GM12878 (cell line): ENCODE measurements at regions of chr1 and their contacts with region 1.

Region 1: DNA sequence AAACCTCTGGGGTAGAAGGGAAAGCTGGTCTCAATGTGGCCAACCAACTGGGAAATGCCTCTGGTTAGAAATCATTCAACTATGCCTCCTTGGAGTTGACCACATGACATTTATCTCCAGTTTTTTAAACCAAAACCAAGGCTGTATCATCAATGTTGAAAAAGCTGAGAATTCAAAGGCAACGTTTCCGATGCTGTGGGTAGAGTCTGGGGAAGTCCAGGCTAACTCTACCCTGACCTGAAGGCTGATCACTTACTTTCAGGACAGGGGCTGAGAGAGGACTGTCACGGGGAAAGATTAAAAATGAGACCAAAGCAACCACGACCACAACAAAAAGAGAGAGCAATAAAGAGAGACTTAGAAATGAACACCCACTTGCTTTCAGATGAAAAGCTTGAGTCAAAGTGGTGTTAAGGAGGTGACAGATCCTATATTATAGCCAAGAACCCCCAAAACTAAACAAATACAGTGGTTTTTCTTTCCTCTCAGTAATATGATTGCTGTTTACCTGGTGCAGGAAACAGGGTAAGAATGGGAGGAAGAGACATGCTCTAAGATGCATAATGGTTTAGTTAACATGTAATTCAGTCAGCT is 90.8 kb upstream of the TNFSF4 start:
- DNase-seq: peak; percentile 92
- ATAC-seq: peak; percentile 95
- H3K4me3 ChIP-seq: peak overlapping the region; percentile 1; the same call in 1 of the 2 replicates
- H3K27ac ChIP-seq: peak overlapping the region; percentile 46; the same call in 1 of the 2 replicates
- H3K4me1 ChIP-seq: peaks cover 29% of the 10 kb centered on the region
- H3K27me3 ChIP-seq: no peaks in the 10 kb centered on the region
- CTCF ChIP-seq: no peak
- EP300 ChIP-seq: peak; percentile 85 to 91
- POLR2A ChIP-seq: no peak
- RAD21 ChIP-seq: peak; percentile 25; the same call in 1 of the 2 replicates

Region 2: GRCh38 chr1:173212952-173213491 is 84.9 kb before region 1 on chr1:
- CTCF ChIA-PET with region 1: interaction called, 3 read pairs
- POLR2A ChIA-PET with region 1: no interaction called
- RAD21 ChIA-PET with region 1: interaction called, 15 read pairs
- SMC1A ChIA-PET with region 1: interaction called, 10 read pairs
- in situ Hi-C with region 1: no loop called
- intact Hi-C with region 1: no loop called
- DNase-seq: peak; percentile 90
- ATAC-seq: peak; percentile 91
- H3K4me3 ChIP-seq: no peak overlapping the region
- H3K27ac ChIP-seq: no peak overlapping the region
- H3K4me1 ChIP-seq: peaks cover 5% of the 10 kb centered on the region
- H3K27me3 ChIP-seq: no peaks in the 10 kb centered on the region
- CTCF ChIP-seq: no peak
- EP300 ChIP-seq: peak; percentile 58 to 92; a peak in 3 of 4 replicates
- POLR2A ChIP-seq: no peak
- RAD21 ChIP-seq: 0 out of 2 replicates have a peak, but pooled peaks have one; percentile 13

Region 3: DNA sequence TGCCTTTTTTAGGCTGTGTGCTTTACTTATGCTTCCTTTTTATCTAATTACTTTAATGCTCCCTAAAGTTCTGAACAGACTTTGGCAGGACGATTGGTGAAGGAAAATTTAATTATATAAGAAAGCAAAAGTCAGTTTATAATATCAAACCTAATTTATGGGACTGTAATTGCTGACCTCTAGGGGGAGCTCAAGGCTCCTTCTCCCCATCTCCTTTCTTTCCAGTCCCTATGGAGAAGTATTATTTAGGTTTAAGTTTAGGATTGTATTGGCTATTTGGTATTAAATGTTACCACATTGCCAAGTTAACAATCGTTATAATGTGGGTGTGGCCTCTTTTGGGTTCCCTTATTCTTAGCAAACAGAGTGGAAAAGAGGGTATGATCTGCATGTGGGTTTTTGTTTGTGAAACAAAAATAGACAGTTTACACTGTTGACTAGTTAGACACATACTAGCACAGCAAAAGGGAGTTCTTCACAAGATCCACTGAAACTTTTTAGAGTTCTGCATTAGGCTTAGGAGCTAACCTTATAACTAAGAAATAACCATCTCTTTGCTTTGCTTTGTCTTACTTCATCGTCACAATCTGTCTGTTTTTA is 42.6 kb before region 1 on chr1:
- CTCF ChIA-PET with region 1: interaction called, 15 read pairs
- POLR2A ChIA-PET with region 1: no interaction called
- RAD21 ChIA-PET with region 1: interaction called, 5 read pairs
- SMC1A ChIA-PET with region 1: interaction called, 8 read pairs
- in situ Hi-C with region 1: no loop called
- intact Hi-C with region 1: loop called (anchors 5 kb)
- DNase-seq: peak; percentile 16
- ATAC-seq: peak; percentile 67
- H3K4me3 ChIP-seq: no peak overlapping the region
- H3K27ac ChIP-seq: no peak overlapping the region
- H3K4me1 ChIP-seq: peaks cover 4% of the 10 kb centered on the region; the same call in 1 of the 2 replicates
- H3K27me3 ChIP-seq: no peaks in the 10 kb centered on the region
- CTCF ChIP-seq: peak; percentile 67 to 80 (median 70)
- EP300 ChIP-seq: no peak
- POLR2A ChIP-seq: no peak
- RAD21 ChIP-seq: peak; percentile 68

Region 4: GRCh38 chr1:173276922-173277800 is 20.7 kb before region 1 on chr1:
- CTCF ChIA-PET with region 1: interaction called, 5 read pairs
- POLR2A ChIA-PET with region 1: no interaction called
- RAD21 ChIA-PET with region 1: interaction called, 5 read pairs
- SMC1A ChIA-PET with region 1: interaction called, 7 read pairs
- in situ Hi-C with region 1: no loop called
- intact Hi-C with region 1: loop called (anchors 1 kb)
- DNase-seq: peak; percentile 45
- ATAC-seq: peak; percentile 98
- H3K4me3 ChIP-seq: no peak overlapping the region
- H3K27ac ChIP-seq: no peak overlapping the region
- H3K4me1 ChIP-seq: peaks cover 12% of the 10 kb centered on the region
- H3K27me3 ChIP-seq: no peaks in the 10 kb centered on the region
- CTCF ChIP-seq: no peak
- EP300 ChIP-seq: no peak
- POLR2A ChIP-seq: no peak
- RAD21 ChIP-seq: no peak

Region 5: GRCh38 chr1:173409613-173410012 is 111.7 kb after region 1 on chr1:
- CTCF ChIA-PET with region 1: no interaction called
- POLR2A ChIA-PET with region 1: interaction called, 3 read pairs
- RAD21 ChIA-PET with region 1: interaction called, 16 read pairs
- SMC1A ChIA-PET with region 1: interaction called, 17 read pairs
- in situ Hi-C with region 1: no loop called
- intact Hi-C with region 1: loop called (anchors 1 kb)
- DNase-seq: no peak
- ATAC-seq: peak; percentile 17
- H3K4me3 ChIP-seq: peak overlapping the region; percentile 35; the same call in 1 of the 2 replicates
- H3K27ac ChIP-seq: peak overlapping the region; percentile 98
- H3K4me1 ChIP-seq: peaks cover 65% of the 10 kb centered on the region
- H3K27me3 ChIP-seq: no peaks in the 10 kb centered on the region
- CTCF ChIP-seq: no peak
- EP300 ChIP-seq: peak in 1 of 2 experiments; percentile 29; a peak in 1 of 4 replicates
- POLR2A ChIP-seq: no peak
- RAD21 ChIP-seq: no peak